ENCODE measurements at regions of chr7 and their contacts with region 1.

Region 1: GRCh38 chr7:50534690-50535290 is 30.4 kb downstream of the DDC start:
- DNase-seq: peak in 1 of 6 donors; percentile 7
- ATAC-seq: peak in 3 of 4 donors; percentile 25 to 31 (median 31)
- H3K4me3 ChIP-seq: no peak overlapping the region
- H3K27ac ChIP-seq: no peak overlapping the region
- H3K4me1 ChIP-seq: peaks cover 0 to 4% (median 0%) of the 10 kb centered on the region in 3 donors
- H3K27me3 ChIP-seq: no peaks in the 10 kb centered on the region
- CTCF ChIP-seq: no peak

Region 2: DNA sequence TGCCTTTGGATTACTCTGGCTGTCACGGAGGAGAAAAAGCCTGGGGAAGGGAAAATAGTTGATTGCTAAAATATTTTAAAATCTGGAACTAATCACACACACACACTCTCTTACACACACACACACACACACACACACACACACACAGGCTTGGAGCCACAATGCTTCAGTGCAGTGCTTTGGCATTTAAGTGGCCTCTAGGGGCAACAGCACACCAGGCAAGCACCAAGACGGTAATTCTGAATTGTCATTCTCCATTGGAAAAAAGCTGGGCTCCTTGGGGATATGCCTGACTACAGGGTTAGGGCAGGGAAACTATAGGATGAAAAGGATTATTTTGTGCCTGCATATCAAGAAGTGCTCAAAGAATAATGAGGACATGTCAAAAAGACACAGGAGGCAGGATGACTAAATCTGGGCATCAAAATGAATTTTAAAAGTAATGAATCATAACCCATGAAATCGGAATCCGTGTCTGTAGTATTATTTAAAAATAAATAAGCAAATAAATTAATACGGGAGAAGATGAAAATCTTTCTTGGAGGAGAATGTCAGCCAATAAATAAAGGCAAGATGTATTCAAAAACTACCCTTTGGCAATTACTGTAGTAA is 60.8 kb after region 1 on chr7:
- intact Hi-C with region 1: loop called in 1 of 3 experiments (anchors 10 kb)
- DNase-seq: no peak
- ATAC-seq: peak in 3 of 4 donors; percentile 46 to 62 (median 47)
- H3K4me3 ChIP-seq: no peak overlapping the region
- H3K27ac ChIP-seq: no peak overlapping the region
- H3K4me1 ChIP-seq: no peaks in the 10 kb centered on the region
- H3K27me3 ChIP-seq: no peaks in the 10 kb centered on the region
- CTCF ChIP-seq: no peak

Region 3: DNA sequence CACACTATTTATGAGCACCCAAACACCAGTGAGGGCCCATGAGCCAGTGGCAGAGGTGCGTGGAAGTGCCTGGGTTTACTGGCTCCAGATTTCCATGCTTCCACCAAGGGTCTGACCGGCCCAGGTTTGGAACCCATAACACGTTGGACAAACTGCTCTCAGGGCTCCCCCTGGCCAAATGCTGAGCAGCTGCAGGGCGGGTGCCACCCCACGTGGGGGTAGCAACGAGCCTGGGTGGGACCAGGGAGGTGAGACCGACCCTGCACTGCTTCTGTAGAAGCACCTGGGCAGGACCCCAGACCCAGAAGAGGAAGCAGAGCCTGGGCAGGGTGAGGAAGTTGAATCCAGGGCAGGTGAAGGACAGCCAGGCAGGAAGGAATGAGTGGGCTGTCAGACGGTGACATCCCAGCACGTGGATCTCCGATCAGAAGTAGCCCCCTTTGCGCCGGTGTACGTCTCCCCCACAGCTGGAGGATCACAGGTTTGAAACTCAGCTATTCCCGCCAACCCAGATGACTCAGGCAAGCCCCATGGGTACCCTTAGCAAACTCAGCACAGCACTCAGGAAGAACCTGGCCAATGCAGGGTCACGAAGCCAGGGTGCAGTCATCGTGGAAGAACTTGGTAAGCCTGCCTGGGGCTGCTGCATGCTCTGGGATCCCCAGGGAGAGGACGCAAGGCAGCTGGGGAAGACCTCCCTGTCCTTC is 130.8 kb after region 1 on chr7:
- intact Hi-C with region 1: no loop called
- DNase-seq: no peak
- ATAC-seq: no peak
- H3K4me3 ChIP-seq: no peak overlapping the region
- H3K27ac ChIP-seq: peak overlapping the region in 1 of 4 donors; percentile 10
- H3K4me1 ChIP-seq: peaks cover 28 to 40% (median 33%) of the 10 kb centered on the region in 3 donors
- H3K27me3 ChIP-seq: no peaks in the 10 kb centered on the region
- CTCF ChIP-seq: no peak

Measured in pancreas (tissue), 10 donors.